ENCODE measurements at regions of chr2 and their contacts with region 1.

Region 1: DNA sequence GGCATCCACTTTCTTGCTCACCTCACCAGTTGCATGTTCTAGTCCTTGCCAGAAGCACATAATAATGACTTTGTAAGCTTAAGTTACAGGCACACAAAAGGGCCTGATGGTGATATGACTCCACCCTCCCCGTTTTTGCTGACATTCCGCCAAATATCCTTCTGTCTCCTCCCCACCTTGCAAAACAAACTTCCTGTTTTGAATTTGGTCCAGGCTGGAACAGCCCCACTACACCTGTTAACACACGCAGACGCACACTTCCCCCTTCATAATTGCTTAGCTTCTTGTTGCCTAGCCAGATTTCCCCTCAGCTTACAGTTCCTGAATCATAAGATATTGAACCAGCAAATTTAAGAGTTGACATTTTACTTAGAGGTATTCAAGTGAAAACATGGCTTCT is at the start of gene MGAT5:
- DNase-seq: peak; percentile 74
- H3K4me3 ChIP-seq: peak within 1 kb of the TSS; percentile 63
- H3K27ac ChIP-seq: peak within 1 kb of the TSS; percentile 84
- H3K4me1 ChIP-seq: peaks cover 100% of the 10 kb centered on the region
- CTCF ChIP-seq: no peak
- total RNA-seq, gene MGAT5: 39.1 and 60.8 TPM in 2 replicates

Region 2: DNA sequence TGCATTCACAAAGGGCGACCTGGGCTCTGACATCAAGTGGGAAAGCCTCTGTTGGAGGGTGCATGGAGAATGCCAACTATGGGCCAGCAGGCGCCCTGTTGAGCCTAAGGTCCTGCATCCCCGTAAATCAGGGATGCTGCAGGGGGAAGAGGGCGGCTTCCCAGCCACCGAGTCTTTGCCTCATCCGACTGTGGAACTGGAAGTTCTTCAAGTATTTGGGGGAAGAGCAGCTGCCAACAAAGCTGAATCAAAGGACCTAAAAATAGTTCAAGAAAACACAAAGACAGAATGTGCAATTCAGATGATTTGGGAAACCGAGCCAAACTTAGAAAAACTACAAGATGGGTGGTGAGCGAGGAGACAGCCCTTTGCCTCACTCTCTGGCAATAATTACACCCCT is 281.0 kb before region 1 on chr2:
- CTCF ChIA-PET with region 1: no interaction called
- POLR2A ChIA-PET with region 1: no interaction called
- intact Hi-C with region 1: no loop called
- DNase-seq: no peak
- H3K4me3 ChIP-seq: no peak overlapping the region
- H3K27ac ChIP-seq: no peak overlapping the region
- H3K4me1 ChIP-seq: no peaks in the 10 kb centered on the region
- CTCF ChIP-seq: no peak

Region 3: GRCh38 chr2:134027980-134028379 is 225.8 kb before region 1 on chr2:
- CTCF ChIA-PET with region 1: no interaction called
- POLR2A ChIA-PET with region 1: no interaction called
- intact Hi-C with region 1: no loop called
- DNase-seq: no peak
- H3K4me3 ChIP-seq: no peak overlapping the region
- H3K27ac ChIP-seq: no peak overlapping the region
- H3K4me1 ChIP-seq: no peaks in the 10 kb centered on the region
- CTCF ChIP-seq: no peak

Region 4: DNA sequence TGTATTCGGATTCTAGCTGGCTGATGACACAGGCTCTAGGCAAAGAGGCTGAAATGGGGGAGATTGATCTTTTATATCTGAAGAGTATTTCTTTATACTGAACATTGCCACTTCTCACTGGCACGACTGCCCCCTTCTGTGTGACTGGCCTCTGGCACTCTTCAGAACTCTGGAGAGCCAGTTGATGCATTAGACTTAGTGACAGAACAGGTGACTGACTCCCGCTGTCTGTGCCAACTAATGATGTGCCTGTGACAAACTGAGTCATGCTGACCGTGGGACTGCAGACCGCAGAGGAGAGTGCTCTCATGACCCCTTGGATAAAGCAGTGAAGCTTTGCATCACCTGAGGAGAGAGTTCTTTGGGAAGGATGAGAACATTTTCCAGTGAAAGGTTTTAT is 14.5 kb after region 1 on chr2:
- CTCF ChIA-PET with region 1: interaction called, 5 read pairs
- POLR2A ChIA-PET with region 1: interaction called, 22 read pairs
- intact Hi-C with region 1: no loop called
- DNase-seq: no peak
- H3K4me3 ChIP-seq: no peak overlapping the region
- H3K27ac ChIP-seq: no peak overlapping the region
- H3K4me1 ChIP-seq: peaks cover 82% of the 10 kb centered on the region
- CTCF ChIP-seq: no peak

Region 5: GRCh38 chr2:134324947-134325346 is 71.1 kb after region 1 on chr2:
- CTCF ChIA-PET with region 1: no interaction called
- POLR2A ChIA-PET with region 1: no interaction called
- intact Hi-C with region 1: no loop called
- DNase-seq: peak; percentile 18
- H3K4me3 ChIP-seq: no peak overlapping the region
- H3K27ac ChIP-seq: no peak overlapping the region
- H3K4me1 ChIP-seq: peaks cover 34% of the 10 kb centered on the region
- CTCF ChIP-seq: no peak

Region 6: DNA sequence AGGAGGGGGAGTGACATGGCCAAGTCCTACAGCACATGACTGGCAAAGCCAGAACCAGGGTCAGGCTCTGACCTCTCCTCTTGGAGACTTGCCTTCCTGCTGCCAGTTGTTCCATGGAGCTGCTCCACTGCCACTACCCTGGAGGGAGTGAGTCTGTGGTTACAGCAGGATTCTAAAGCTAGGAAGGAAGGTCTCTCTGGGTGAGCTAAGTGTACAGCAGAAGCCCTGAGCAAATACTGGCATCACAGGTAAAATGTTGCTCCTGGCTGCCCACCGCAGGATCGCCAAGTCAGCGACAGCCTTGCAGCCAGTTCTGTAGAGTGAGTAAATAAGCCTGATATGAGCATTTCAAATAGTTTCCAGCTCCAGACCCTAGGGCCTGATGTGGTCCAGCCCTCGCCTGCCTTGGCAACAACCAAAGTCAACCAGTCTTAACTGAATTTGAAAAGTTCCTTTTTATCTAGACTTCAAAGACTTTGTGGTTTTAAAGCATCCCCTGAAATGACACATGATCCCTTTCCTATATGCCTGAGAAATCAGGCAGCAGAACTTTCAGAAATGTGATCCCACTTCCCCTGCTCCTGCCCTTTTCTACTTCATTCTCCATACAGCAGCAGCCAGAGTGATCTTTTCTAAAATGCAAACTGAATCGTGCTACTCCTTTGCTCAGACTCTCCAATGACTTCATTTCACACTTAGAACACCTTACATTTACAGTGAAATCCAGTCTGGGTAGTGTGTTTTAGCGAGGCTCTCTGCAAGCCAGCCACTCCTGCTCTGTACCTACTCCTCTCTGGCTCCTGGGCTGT is 114.4 kb after region 1 on chr2:
- CTCF ChIA-PET with region 1: no interaction called
- POLR2A ChIA-PET with region 1: interaction called, 4 read pairs
- intact Hi-C with region 1: loop called (anchors 5 kb)
- DNase-seq: peak; percentile 24
- H3K4me3 ChIP-seq: no peak overlapping the region
- H3K27ac ChIP-seq: peak overlapping the region; percentile 37
- H3K4me1 ChIP-seq: peaks cover 29% of the 10 kb centered on the region
- CTCF ChIP-seq: no peak